ENCODE measurements at regions of chr4 and their contacts with region 1.

Region 1: DNA sequence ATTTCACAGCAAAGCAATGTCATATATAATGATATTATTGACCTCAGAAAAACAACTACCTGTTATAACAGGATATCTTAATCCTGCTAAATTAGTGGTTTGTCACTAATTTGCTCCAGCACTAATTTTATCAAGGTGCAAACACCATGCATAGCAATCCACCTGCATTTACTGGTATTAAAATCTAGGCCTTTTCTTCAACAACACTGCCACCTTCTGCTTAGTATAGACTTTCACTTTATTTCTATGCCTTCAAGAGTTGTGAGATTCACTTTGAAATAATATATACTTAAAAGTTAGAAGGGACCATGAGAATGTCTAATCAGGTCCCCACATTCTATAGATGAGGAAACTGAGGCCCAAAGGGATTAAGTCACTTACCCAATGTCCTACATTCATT is 82.1 kb upstream of the IQCM start:
- DNase-seq: no peak
- H3K4me3 ChIP-seq: no peak overlapping the region
- CTCF ChIP-seq: no peak
- POLR2A ChIP-seq: no peak

Region 2: GRCh38 chr4:149370785-149371420 is 526.9 kb before region 1 on chr4:
- intact Hi-C with region 1: loop called (anchors 10 kb)
- DNase-seq: no peak
- H3K4me3 ChIP-seq: no peak overlapping the region
- CTCF ChIP-seq: no peak
- POLR2A ChIP-seq: no peak

Measured in lower leg skin (tissue), 4 donors.